Activated naive CD4-positive, alpha-beta T cell treated with anti-CD3 and anti-CD28 coated beads for 36 hours (primary cell): ENCODE measurements at regions of chr5 and their contacts with region 1.

Region 1: GRCh38 chr5:148730943-148731861 is 76.9 kb upstream of the HTR4 start:
- DNase-seq: peak; percentile 87
- H3K4me3 Mint-ChIP-seq: no peak overlapping the region
- H3K27ac Mint-ChIP-seq: no peak overlapping the region
- H3K4me1 Mint-ChIP-seq: peaks cover 2% of the 10 kb centered on the region
- H3K27me3 Mint-ChIP-seq: peaks cover 3% of the 10 kb centered on the region

Region 2: DNA sequence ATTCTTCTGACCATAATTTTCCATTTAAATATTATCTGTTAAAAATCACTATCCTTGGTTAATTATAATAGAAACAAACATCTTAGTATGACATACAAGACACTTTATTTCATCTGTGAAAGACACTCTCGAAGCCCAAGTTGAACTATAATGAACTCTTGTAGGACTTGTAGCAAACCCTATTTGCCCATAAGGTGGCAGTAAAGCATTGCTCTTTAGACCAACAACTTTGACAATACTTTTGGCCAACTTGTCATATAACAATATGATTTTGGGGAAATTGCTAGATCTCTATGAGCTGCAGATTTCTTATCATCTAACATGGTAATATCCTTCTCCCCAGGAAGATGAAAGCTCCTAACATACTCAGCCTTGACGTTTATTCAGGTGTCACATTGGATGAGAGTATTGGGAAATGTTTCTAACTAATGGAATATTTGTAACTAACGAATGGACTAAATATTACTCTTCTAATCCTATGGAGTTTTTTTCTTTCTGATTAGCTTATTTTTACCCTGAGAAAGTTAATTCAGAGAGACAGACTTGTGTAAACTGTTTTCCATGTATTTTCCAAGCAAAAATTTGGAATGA is 551.9 kb before region 1 on chr5:
- CTCF ChIA-PET with region 1: interaction called, 29 read pairs
- intact Hi-C with region 1: loop called (anchors 1 kb)
- DNase-seq: peak; percentile 11
- H3K4me3 Mint-ChIP-seq: no peak overlapping the region
- H3K27ac Mint-ChIP-seq: no peak overlapping the region
- H3K4me1 Mint-ChIP-seq: no peaks in the 10 kb centered on the region
- H3K27me3 Mint-ChIP-seq: peaks cover 11% of the 10 kb centered on the region

Region 3: DNA sequence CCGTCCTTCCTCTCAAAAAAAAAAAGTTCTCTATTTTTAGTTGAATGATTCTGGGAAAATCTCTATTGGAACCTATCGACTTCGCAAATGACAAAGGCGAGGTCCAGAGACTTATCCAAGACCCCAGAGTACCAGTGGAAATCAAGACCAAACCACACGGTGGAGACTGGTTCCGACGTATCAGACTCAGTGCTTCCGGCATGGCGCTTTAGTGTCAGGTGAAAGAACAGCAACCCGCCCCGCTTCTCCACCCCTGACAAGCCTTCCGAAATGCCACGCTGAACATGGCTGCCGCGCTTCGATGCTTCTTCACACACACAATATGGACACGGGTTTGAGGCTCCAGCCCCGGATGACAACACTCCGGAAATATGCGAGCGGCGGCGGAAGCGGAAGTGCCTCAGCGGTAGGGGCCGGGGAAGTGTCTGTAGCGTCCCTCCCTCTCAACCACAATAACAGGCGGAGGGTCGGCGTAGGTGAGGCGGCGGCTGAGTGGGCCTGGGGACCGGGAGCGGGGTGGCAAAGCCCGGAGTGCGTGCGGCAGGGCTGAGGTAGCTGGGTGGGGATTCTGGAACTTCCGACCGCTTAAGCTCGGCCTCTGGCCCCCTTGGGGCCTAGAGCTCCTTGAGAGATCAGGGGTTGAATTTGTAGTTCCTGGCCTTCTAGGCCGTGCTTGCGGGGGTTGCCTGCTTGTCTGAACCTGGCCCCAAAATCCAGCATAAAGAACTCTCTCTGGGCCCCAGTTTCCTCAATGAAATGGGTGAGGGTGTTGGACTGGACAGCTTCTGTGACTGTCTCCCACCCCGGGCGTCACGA is 347.4 kb before region 1 on chr5 and contains the start of gene FBXO38:
- CTCF ChIA-PET with region 1: interaction called, 3 read pairs
- intact Hi-C with region 1: loop called (anchors 1 kb)
- DNase-seq: peak; percentile 99
- H3K4me3 Mint-ChIP-seq: peak within 1 kb of the TSS; percentile 89
- H3K27ac Mint-ChIP-seq: peak within 1 kb of the TSS; percentile 94
- H3K4me1 Mint-ChIP-seq: peaks cover 63% of the 10 kb centered on the region
- H3K27me3 Mint-ChIP-seq: no peaks in the 10 kb centered on the region
- total RNA-seq, gene FBXO38: 31.7 to 34.2 TPM

Region 4: GRCh38 chr5:148713735-148714508 is 17.3 kb before region 1 on chr5:
- CTCF ChIA-PET with region 1: interaction called, 14 read pairs
- intact Hi-C with region 1: no loop called
- DNase-seq: no peak
- H3K4me3 Mint-ChIP-seq: no peak overlapping the region
- H3K27ac Mint-ChIP-seq: no peak overlapping the region
- H3K4me1 Mint-ChIP-seq: peaks cover 5% of the 10 kb centered on the region
- H3K27me3 Mint-ChIP-seq: peaks cover 41% of the 10 kb centered on the region

Region 5: DNA sequence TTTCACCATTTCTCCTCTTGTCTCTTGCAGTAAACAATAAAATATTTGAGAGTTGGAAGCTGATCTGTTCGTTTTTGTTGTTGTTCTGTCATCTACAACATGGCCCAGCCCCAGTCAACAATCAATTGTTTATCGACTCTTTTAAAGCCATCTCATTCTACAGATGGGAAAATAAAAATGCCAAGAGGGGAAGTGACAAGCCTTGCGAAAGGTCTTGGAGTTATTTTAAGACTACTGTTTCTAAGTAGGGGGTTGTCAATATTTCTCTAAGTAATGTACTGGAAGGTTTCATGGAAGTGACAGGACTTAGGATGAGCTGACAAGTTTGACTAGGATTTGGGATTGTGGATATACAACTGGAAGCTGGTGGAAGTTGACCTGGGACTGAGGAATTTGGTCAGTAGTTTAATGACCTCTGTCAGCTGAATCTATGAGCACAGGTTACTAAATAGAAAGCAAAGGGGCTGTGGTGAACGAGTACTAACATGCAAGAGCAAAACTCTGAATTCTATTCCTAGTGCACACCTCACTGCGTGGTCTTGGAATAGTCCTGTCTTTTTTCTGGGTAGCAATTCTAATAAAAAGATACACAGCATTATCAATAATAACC is 37.7 kb after region 1 on chr5:
- CTCF ChIA-PET with region 1: no interaction called
- intact Hi-C with region 1: no loop called
- DNase-seq: no peak
- H3K4me3 Mint-ChIP-seq: no peak overlapping the region
- H3K27ac Mint-ChIP-seq: no peak overlapping the region
- H3K4me1 Mint-ChIP-seq: no peaks in the 10 kb centered on the region
- H3K27me3 Mint-ChIP-seq: peaks cover 30% of the 10 kb centered on the region

Region 6: GRCh38 chr5:148963664-148964063 is 232.5 kb after region 1 on chr5:
- CTCF ChIA-PET with region 1: interaction called, 227 read pairs
- intact Hi-C with region 1: no loop called
- DNase-seq: no peak
- H3K4me3 Mint-ChIP-seq: no peak overlapping the region
- H3K27ac Mint-ChIP-seq: no peak overlapping the region
- H3K4me1 Mint-ChIP-seq: peaks cover 2% of the 10 kb centered on the region
- H3K27me3 Mint-ChIP-seq: peaks cover 3% of the 10 kb centered on the region

Region 7: GRCh38 chr5:149268928-149269557 is 537.8 kb after region 1 on chr5:
- CTCF ChIA-PET with region 1: interaction called, 6 read pairs
- intact Hi-C with region 1: loop called (anchors 1 kb)
- DNase-seq: no peak
- H3K4me3 Mint-ChIP-seq: no peak overlapping the region
- H3K27ac Mint-ChIP-seq: no peak overlapping the region
- H3K4me1 Mint-ChIP-seq: peaks cover 16% of the 10 kb centered on the region
- H3K27me3 Mint-ChIP-seq: peaks cover 20% of the 10 kb centered on the region

Region 8: DNA sequence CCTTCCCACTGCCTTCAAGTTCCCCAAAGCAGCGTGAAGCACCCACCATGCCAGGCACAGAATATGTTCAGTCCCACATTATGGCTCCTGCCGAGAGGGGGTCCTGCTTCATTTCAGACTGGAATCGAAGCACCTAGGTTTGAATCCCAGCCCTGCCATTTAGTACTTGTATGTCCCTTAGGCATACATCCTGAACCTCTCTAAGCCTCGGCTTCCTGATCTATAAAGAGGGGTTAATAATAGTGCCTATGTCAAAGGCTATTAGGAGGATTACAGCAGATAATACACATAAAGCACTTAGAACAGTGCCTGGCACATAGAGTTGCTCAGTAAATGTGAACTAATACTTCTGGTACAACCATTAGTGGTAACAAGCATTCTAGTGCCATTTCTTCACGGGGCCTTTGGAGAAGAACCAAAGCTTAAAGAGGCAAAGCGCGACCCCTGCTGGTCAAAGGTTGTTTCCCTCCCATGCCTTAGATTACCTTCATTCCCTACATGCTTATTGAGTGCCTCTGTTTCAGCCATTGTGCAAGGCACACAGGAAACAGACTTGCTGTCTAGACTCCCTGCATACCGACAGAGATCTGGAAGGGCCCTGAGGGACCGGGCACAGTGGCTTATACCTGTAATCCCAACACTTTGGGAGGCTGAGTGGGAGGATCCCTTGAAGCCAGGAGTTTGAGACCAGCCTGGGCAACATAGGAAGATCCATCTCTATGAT is 1097.1 kb after region 1 on chr5:
- CTCF ChIA-PET with region 1: no interaction called
- intact Hi-C with region 1: no loop called
- DNase-seq: peak; percentile 93
- H3K4me3 Mint-ChIP-seq: no peak overlapping the region
- H3K27ac Mint-ChIP-seq: no peak overlapping the region
- H3K4me1 Mint-ChIP-seq: peaks cover 7% of the 10 kb centered on the region
- H3K27me3 Mint-ChIP-seq: no peaks in the 10 kb centered on the region